ENCODE measurements at regions of chr5 and their contacts with region 1.

Region 1: GRCh38 chr5:39080597-39081204 is 6.5 kb upstream of the RICTOR start:
- DNase-seq: peak in 4 of 35 experiments; percentile 4 to 64 (median 20)
- ATAC-seq: peak in 1 of 4 experiments; percentile 38
- H3K4me3 ChIP-seq: no peak overlapping the region
- H3K4me3 Mint-ChIP-seq: no peak overlapping the region
- H3K27ac ChIP-seq: no peak overlapping the region
- H3K27ac Mint-ChIP-seq: no peak overlapping the region
- H3K4me1 ChIP-seq: no peaks in the 10 kb centered on the region
- H3K4me1 Mint-ChIP-seq: peaks cover 15 to 20% (median 17%) of the 10 kb centered on the region in 3 donors
- H3K27me3 ChIP-seq: peaks cover 0 to 9% of the 10 kb centered on the region in 2 experiments
- H3K27me3 Mint-ChIP-seq: peaks cover 26 to 55% of the 10 kb centered on the region in 2 donors

Region 2: DNA sequence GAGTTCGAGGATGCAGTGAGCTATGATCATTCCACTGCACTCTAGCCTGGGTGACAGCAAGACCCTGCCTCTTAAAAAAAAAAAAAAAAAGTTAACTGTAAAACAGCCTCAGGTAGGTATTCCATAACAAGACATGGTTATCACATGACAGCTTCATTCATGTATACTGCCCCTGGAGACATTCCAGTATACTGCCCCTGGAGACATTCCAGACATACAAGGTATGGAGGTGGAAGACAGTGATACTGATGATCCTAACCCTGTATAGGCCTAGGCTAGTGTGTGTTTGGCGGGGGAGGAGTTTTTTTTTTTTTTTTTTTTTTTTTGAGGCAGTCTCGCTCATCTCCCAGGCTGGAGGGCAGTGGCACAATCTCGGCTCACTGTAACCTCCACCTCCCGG is 112.0 kb before region 1 on chr5:
- CTCF ChIA-PET with region 1: interaction called, 4 to 10 read pairs
- POLR2A ChIA-PET with region 1: interaction called in 1 of 2 experiments, 9 read pairs
- DNase-seq: no peak
- ATAC-seq: no peak
- H3K4me3 ChIP-seq: no peak overlapping the region
- H3K4me3 Mint-ChIP-seq: no peak overlapping the region
- H3K27ac ChIP-seq: no peak overlapping the region
- H3K27ac Mint-ChIP-seq: no peak overlapping the region
- H3K4me1 ChIP-seq: no peaks in the 10 kb centered on the region
- H3K4me1 Mint-ChIP-seq: no peaks in the 10 kb centered on the region
- H3K27me3 ChIP-seq: no peaks in the 10 kb centered on the region
- H3K27me3 Mint-ChIP-seq: no peaks in the 10 kb centered on the region

Region 3: GRCh38 chr5:39005566-39006232 is 75.0 kb before region 1 on chr5:
- CTCF ChIA-PET with region 1: interaction called, 5 to 26 read pairs
- POLR2A ChIA-PET with region 1: interaction called in 1 of 2 experiments, 5 read pairs
- DNase-seq: peak in 5 of 35 experiments; percentile 12 to 53 (median 24)
- ATAC-seq: peak; percentile 65 to 84 (median 67)
- H3K4me3 ChIP-seq: no peak overlapping the region
- H3K4me3 Mint-ChIP-seq: no peak overlapping the region
- H3K27ac ChIP-seq: no peak overlapping the region
- H3K27ac Mint-ChIP-seq: peak overlapping the region; percentile 51 to 60
- H3K4me1 ChIP-seq: peaks cover 0 to 2% of the 10 kb centered on the region in 2 experiments
- H3K4me1 Mint-ChIP-seq: peaks cover 39 to 63% (median 57%) of the 10 kb centered on the region in 3 donors
- H3K27me3 ChIP-seq: no peaks in the 10 kb centered on the region
- H3K27me3 Mint-ChIP-seq: no peaks in the 10 kb centered on the region

Measured in T-cell (primary cell).